Activated B cell treated with CpG ODN at 0.5 μM for 24 hours (primary cell): ENCODE measurements at regions of chr2 and their contacts with region 1.

Region 1: DNA sequence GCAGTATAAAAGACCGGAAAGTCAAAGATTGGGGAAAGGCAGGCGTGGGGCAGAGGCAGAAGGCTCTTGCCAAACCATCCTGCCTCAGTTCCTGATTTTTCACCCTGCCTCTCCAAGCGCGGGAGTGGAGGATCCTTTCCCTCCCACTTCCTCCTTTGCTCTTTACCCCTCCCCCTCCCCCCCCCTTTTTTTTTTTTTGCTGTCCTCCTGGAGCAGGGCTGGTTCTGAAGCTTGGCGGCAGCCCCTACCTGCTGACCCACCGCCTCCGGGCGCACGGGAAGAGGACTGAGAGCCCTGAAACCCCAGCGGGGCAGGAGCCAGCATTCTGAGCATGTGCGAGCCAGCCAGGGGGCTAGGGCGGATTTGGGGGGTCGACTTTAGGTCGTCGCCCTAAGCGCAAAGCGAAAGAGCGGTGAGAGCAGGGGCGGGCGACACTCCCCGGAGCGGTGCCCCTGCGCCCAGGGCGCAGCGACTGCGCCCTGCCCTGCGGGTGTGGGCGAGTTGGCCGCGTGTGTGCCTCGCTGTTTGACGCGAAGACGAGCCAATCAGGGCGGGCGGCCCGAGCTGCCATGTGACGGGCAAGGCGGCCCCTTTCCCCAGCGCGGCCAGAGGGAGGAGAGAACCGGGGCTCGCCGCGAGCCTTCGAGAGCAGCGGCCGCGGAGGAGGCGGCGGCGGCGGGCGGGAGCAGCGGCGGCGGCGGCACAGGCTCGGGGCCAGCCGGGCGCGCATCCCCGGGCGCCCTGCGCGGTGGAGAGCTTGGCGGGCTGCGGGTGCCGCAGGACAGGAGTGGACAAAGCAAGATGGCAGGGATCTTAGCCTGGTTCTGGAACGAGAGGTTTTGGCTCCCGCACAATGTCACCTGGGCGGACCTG is at the start of gene CERS6:
- DNase-seq: peak; percentile 78
- ATAC-seq: peak; percentile 94
- H3K4me3 Mint-ChIP-seq: no peak within 1 kb of the TSS
- H3K27ac Mint-ChIP-seq: peak within 1 kb of the TSS; percentile 74
- H3K4me1 Mint-ChIP-seq: peaks cover 20% of the 10 kb centered on the region
- H3K27me3 Mint-ChIP-seq: no peaks in the 10 kb centered on the region
- CTCF ChIP-seq: no peak
- total RNA-seq, gene CERS6: 5.3 and 6.1 TPM in 2 replicates

Region 2: DNA sequence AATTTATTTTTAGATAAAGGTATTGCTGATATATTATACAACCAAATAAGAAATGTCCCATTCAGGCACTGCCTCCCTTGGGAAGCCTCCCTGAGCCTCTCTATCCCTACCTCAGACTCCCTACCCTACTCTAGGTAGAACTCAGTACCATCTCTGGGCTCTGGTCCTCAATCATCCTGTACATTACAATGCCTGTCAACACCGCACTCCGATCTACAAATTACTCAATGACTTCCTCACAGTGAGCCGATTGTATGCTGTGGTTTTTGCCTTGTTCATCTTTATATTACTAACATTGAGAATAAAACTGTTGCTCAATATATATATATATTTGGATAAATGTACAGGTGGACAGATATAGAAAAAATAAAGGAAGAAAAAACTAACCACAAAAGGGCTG is 416.0 kb before region 1 on chr2:
- CTCF ChIA-PET with region 1: no interaction called
- POLR2A ChIA-PET with region 1: no interaction called
- intact Hi-C with region 1: loop called (anchors 5 kb)
- DNase-seq: no peak
- ATAC-seq: peak; percentile 30
- H3K4me3 Mint-ChIP-seq: peak overlapping the region; percentile 2
- H3K27ac Mint-ChIP-seq: no peak overlapping the region
- H3K4me1 Mint-ChIP-seq: peaks cover 83% of the 10 kb centered on the region
- H3K27me3 Mint-ChIP-seq: no peaks in the 10 kb centered on the region
- CTCF ChIP-seq: no peak

Region 3: GRCh38 chr2:168470320-168471162 is 14.7 kb after region 1 on chr2:
- CTCF ChIA-PET with region 1: no interaction called
- POLR2A ChIA-PET with region 1: interaction called, 5 read pairs
- intact Hi-C with region 1: loop called (anchors 1 kb)
- DNase-seq: no peak
- ATAC-seq: peak; percentile 14
- H3K4me3 Mint-ChIP-seq: no peak overlapping the region
- H3K27ac Mint-ChIP-seq: no peak overlapping the region
- H3K4me1 Mint-ChIP-seq: peaks cover 55% of the 10 kb centered on the region
- H3K27me3 Mint-ChIP-seq: no peaks in the 10 kb centered on the region
- CTCF ChIP-seq: no peak

Region 4: GRCh38 chr2:168552450-168552856 is 96.6 kb after region 1 on chr2:
- CTCF ChIA-PET with region 1: no interaction called
- POLR2A ChIA-PET with region 1: no interaction called
- intact Hi-C with region 1: loop called (anchors 5 kb)
- DNase-seq: no peak
- ATAC-seq: peak; percentile 84
- H3K4me3 Mint-ChIP-seq: peak overlapping the region; percentile 19
- H3K27ac Mint-ChIP-seq: peak overlapping the region; percentile 47
- H3K4me1 Mint-ChIP-seq: peaks cover 24% of the 10 kb centered on the region
- H3K27me3 Mint-ChIP-seq: no peaks in the 10 kb centered on the region
- CTCF ChIP-seq: no peak

Region 5: GRCh38 chr2:168712049-168712448 is 256.2 kb after region 1 on chr2:
- CTCF ChIA-PET with region 1: no interaction called
- POLR2A ChIA-PET with region 1: no interaction called
- intact Hi-C with region 1: loop called (anchors 2 kb)
- DNase-seq: no peak
- ATAC-seq: peak; percentile 97
- H3K4me3 Mint-ChIP-seq: peak overlapping the region; percentile 32
- H3K27ac Mint-ChIP-seq: peak overlapping the region; percentile 72
- H3K4me1 Mint-ChIP-seq: peaks cover 20% of the 10 kb centered on the region
- H3K27me3 Mint-ChIP-seq: no peaks in the 10 kb centered on the region
- CTCF ChIP-seq: no peak

Region 6: DNA sequence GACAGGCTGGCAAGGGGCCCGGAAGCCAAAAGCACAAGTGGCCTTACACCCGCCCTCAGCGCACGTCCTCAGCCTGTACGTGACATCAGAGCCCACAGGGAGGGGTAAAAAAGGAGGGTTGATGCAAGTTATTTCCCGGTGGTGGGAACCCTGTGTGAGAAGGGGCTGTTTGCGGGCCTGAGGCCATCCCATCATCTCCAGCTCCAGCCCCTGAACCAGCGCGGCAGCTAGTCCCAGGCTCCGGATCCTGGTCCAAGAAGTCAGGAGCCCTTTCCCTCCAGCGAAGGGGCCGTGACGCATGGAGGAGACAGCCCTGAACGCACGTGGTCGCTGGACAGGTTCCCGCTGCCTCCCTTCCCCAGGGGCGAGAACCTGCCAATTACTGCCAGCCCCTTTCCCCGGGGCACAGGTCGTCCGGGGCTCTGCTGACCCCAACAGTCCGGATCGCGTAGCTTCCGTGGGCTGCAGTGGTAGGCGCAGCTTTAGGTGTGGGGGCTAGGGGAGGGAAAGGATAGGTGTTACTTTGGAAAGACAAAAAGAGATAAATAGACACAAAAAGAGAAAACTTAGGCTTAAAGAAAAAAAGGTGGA is 907.8 kb after region 1 on chr2:
- CTCF ChIA-PET with region 1: no interaction called
- POLR2A ChIA-PET with region 1: no interaction called
- intact Hi-C with region 1: loop called (anchors 5 kb)
- DNase-seq: peak; percentile 18
- ATAC-seq: peak; percentile 67
- H3K4me3 Mint-ChIP-seq: peak overlapping the region; percentile 88
- H3K27ac Mint-ChIP-seq: no peak overlapping the region
- H3K4me1 Mint-ChIP-seq: peaks cover 38% of the 10 kb centered on the region
- H3K27me3 Mint-ChIP-seq: peaks cover 41% of the 10 kb centered on the region
- CTCF ChIP-seq: no peak